Heart left ventricle (tissue), 16 donors: ENCODE measurements at regions of chrX and their contacts with region 1.

Region 1: DNA sequence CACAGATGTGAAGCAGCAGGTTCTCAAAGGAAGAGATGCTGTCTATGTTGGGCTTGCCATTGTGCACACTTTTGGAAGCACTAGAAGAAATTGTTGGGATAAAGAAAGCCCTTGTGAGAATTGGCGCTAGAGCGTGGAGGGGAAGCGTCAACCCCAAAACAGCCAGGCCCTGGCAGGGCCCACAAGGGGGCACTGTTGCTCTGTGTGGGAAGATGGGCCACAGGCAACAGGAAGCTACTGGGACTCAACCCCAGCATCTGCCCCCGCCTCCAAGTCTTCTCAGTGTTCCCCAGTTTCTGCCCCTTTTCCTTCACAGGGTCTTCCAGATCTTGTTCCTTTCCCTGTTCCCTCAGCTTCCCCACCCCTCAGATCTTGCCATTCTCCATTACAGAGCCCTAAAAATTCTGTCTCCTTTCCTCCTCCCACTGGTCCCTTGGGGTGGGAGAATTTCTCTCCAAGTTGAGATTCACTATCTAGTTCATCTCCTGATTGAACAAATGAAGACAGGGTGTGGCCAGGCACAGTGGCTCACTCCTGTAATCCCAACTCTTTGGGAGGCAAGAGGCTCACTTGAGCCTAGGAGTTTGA is 85.5 kb downstream of the STARD8 start:
- DNase-seq: peak; percentile 47 to 70 (median 52)
- ATAC-seq: peak; percentile 42 to 86 (median 76)
- H3K4me3 ChIP-seq: no peak overlapping the region
- H3K27ac ChIP-seq: no peak overlapping the region
- H3K4me1 ChIP-seq: no peaks in the 10 kb centered on the region
- H3K27me3 ChIP-seq: peaks cover 0 to 35% (median 0%) of the 10 kb centered on the region in 9 donors
- CTCF ChIP-seq: peak; percentile 54 to 73 (median 68)
- POLR2A ChIP-seq: no peak

Region 2: DNA sequence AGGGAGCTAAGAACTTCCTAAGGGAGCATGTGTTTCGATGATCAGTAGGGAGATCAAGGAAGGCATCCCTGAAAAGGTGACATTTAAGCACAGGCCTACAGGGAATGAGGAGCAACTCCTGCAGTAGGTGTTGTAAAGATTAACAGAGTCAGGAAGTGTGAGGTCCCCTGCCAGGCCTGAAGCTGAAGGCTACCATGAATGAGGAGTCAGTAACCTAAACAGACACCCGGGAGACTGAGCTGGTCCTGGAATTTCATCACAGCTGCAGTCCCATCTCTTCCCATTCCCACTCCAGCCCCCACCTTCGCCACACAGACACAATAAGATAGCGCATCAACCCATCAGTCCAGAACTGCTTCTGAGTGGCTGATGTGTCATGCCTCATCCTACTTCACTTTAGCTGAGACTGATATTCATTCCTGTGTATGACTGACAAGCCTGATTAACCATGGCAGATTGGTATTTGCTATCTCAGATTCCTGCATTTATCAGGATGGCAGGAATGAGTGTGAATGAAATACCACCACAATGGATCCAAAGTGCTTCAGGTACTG is 68.8 kb after region 1 on chrX:
- intact Hi-C with region 1: loop called in 4 of 10 experiments (anchors 2 to 5 kb)
- DNase-seq: no peak
- ATAC-seq: no peak
- H3K4me3 ChIP-seq: no peak overlapping the region
- H3K27ac ChIP-seq: no peak overlapping the region
- H3K4me1 ChIP-seq: no peaks in the 10 kb centered on the region
- H3K27me3 ChIP-seq: peaks cover 0 to 18% (median 0%) of the 10 kb centered on the region in 9 donors
- CTCF ChIP-seq: no peak
- POLR2A ChIP-seq: no peak